ENCODE measurements at regions of chr1 and their contacts with region 1.

Region 1: DNA sequence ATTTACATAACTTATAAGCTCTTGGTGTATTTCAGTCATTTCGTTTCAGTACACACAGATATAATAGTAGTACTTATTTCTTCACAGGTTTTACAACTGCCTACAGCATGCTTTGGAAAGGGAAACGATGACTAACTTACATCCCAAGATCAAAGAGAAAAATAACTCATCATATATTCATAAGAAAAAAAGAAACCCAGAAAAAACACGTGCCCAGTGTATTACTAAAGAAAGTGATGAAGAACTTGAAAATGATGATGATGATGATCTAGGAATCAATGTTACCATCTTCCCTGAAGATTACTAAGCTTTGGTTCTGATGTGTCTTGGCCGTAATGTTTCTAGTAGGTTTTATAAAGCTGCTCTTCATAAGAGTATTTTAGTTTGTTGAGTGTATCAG is 30.9 kb downstream of the TYW3 start:
- DNase-seq: no peak
- H3K4me3 Mint-ChIP-seq: no peak overlapping the region
- H3K27ac Mint-ChIP-seq: peak overlapping the region; percentile 63
- H3K4me1 Mint-ChIP-seq: peaks cover 22% of the 10 kb centered on the region
- H3K27me3 Mint-ChIP-seq: no peaks in the 10 kb centered on the region

Region 2: DNA sequence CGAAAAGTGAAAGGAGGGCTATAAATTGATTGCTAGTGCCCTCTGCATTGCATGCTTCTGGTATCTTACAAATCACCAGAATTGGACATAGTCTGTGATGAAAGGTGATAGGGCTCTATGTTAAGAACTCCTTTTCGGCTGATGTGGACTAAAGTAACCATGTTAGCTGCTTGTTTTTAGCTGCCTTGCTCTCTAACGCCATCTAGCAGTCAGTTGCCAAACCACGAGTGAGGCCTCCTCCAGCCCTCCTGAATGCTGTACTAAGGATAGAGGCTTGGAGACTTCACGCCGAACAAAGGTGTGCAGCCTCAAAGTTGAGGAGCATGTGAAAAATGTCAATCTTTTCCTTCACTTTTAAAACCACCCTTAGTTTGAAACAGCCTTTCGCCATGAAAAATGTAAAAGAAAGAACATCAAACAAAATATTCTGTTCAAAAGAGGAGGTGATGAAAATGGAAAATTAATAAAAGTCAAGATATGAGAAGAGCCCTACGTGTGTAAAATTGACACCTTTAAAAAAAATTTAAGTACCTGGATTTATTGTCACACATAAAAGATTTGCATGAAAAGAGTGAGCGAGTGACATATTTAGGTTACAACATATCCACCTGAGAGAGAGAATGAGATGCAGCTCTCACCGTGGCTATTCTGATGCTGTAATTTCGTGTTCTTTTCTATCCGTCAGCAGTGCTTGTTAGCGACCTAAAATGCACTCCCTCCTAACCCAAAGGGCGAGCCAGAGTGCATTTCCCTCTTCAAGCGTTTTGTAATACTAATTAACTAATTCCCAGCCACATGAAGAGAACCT is 259.5 kb before region 1 on chr1:
- CTCF ChIA-PET with region 1: no interaction called
- POLR2A ChIA-PET with region 1: no interaction called
- intact Hi-C with region 1: no loop called
- DNase-seq: peak; percentile 62
- H3K4me3 Mint-ChIP-seq: no peak overlapping the region
- H3K27ac Mint-ChIP-seq: no peak overlapping the region
- H3K4me1 Mint-ChIP-seq: peaks cover 3% of the 10 kb centered on the region
- H3K27me3 Mint-ChIP-seq: peaks cover 2% of the 10 kb centered on the region

Region 3: DNA sequence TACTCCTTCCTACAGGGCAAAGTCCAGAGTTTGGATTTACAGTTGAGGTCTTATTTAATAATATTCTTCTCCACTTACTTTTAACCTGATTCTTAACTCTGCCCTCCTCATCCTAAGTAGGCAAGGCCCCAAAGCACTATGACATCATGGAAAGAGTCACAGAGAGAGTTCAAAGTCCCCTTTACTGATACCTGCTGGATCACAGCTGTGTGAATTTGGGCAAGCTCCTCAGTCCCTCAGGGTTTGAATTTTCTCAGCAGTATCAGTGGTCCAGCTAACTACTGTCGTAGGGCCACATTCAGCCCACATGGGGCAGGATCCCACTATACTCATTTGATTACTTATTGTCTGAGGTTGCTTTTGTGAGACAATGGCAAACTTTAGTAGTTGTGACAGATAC is 14.8 kb before region 1 on chr1:
- CTCF ChIA-PET with region 1: no interaction called
- POLR2A ChIA-PET with region 1: no interaction called
- intact Hi-C with region 1: loop called (anchors 1 kb)
- DNase-seq: no peak
- H3K4me3 Mint-ChIP-seq: no peak overlapping the region
- H3K27ac Mint-ChIP-seq: no peak overlapping the region
- H3K4me1 Mint-ChIP-seq: peaks cover 7% of the 10 kb centered on the region
- H3K27me3 Mint-ChIP-seq: no peaks in the 10 kb centered on the region

Region 4: GRCh38 chr1:74824497-74825107 is 60.8 kb after region 1 on chr1:
- CTCF ChIA-PET with region 1: no interaction called
- POLR2A ChIA-PET with region 1: no interaction called
- intact Hi-C with region 1: no loop called
- DNase-seq: no peak
- H3K4me3 Mint-ChIP-seq: no peak overlapping the region
- H3K27ac Mint-ChIP-seq: no peak overlapping the region
- H3K4me1 Mint-ChIP-seq: no peaks in the 10 kb centered on the region
- H3K27me3 Mint-ChIP-seq: no peaks in the 10 kb centered on the region

Region 5: GRCh38 chr1:74908797-74909196 is 145.0 kb after region 1 on chr1:
- CTCF ChIA-PET with region 1: no interaction called
- POLR2A ChIA-PET with region 1: no interaction called
- intact Hi-C with region 1: no loop called
- DNase-seq: no peak
- H3K4me3 Mint-ChIP-seq: no peak overlapping the region
- H3K27ac Mint-ChIP-seq: no peak overlapping the region
- H3K4me1 Mint-ChIP-seq: no peaks in the 10 kb centered on the region
- H3K27me3 Mint-ChIP-seq: no peaks in the 10 kb centered on the region

Region 6: DNA sequence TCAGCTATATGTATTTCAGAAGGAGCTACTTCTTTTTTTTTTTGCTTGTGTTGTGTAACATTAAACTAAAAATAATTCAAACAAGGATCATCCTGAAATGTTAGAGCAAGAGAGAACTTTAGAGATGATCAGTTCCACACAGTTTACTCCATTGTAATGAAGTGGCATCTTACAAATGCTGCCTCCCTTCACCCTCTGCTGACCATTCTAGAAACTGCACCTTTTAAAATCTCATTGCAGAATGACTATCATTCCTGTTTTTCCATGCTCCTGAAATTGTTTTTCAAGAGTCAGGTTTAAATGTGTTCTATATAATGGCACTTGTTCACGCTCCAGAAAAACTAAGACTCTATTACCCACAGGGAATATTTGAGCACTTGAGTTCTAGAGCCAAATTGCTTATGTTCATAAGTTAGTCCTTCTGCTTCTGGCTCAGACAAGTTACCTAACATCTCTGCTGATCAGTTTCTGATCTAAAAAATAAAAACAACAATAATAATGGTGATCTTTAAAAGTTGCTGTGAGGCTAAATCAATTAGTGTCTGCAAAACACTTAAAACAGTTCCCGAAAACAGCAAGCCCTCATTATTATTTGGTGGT is 868.6 kb after region 1 on chr1:
- CTCF ChIA-PET with region 1: no interaction called
- POLR2A ChIA-PET with region 1: no interaction called
- intact Hi-C with region 1: no loop called
- DNase-seq: no peak
- H3K4me3 Mint-ChIP-seq: no peak overlapping the region
- H3K27ac Mint-ChIP-seq: no peak overlapping the region
- H3K4me1 Mint-ChIP-seq: no peaks in the 10 kb centered on the region
- H3K27me3 Mint-ChIP-seq: peaks cover 12% of the 10 kb centered on the region